GM12878 (cell line): ENCODE measurements at regions of chr4 and their contacts with region 1.

Region 1: DNA sequence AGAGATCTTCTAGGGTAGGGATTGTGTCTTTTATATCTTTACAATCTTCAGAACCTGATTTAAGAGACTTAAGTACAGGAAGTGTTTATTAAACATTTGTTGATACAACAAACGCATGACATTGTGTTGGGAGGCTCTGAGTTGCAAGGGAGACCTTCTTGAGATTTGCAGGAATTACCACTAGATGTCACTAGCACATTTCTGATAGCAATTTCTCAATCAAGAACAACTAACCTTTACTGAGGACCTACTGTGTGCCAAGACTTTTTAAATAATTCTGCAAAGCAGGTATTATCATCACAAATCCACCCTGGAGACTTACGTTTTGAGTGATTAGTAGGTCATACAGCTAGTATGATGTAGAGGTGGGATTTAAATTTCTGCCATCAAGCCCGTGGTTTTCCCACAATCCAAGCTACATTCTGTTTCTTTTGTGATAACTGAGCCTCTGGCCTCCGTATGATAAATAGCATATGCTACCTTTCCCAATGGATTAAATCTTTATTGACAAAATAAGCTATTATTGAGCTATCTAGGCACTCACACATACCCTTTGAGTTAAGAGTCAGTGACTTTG is 986.0 kb downstream of the CCSER1 start:
- DNase-seq: peak; percentile 5
- ATAC-seq: peak; percentile 60
- H3K4me3 ChIP-seq: no peak overlapping the region
- H3K27ac ChIP-seq: no peak overlapping the region
- H3K4me1 ChIP-seq: no peaks in the 10 kb centered on the region
- H3K27me3 ChIP-seq: no peaks in the 10 kb centered on the region
- CTCF ChIP-seq: peak; percentile 51 to 75 (median 57)
- EP300 ChIP-seq: no peak
- POLR2A ChIP-seq: no peak
- RAD21 ChIP-seq: peak; percentile 64

Region 2: DNA sequence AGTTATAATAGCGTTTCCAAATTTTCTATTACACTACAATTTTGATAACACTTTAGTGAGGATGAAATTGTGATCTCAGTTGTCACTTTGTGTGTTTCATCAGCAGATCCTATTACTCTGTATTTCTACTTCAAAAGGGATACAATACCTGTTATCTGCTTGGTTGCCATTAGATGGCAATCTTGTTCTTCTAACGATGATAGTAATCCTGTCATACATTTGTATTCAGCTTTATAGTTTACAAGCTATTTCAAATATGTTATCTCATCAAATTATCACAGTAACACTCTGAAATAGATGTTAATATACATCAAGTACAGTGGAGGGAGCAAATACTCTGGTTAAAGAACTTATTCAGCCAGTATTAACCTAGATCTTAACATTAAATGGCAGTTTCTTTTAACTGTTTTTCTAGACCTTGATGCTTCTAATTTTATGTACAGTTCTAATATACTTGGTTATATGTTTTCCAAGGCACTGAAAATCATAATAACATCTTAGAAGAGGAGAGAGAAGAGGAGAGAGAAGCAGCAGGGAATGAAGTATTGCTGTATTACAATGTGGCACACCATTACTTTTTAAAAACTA is 694.0 kb before region 1 on chr4:
- CTCF ChIA-PET with region 1: interaction called, 20 read pairs
- POLR2A ChIA-PET with region 1: no interaction called
- RAD21 ChIA-PET with region 1: interaction called, 9 read pairs
- SMC1A ChIA-PET with region 1: interaction called, 13 read pairs
- in situ Hi-C with region 1: no loop called
- intact Hi-C with region 1: loop called (anchors 10 kb)
- DNase-seq: no peak
- ATAC-seq: peak; percentile 79
- H3K4me3 ChIP-seq: no peak overlapping the region
- H3K27ac ChIP-seq: no peak overlapping the region
- H3K4me1 ChIP-seq: no peaks in the 10 kb centered on the region
- H3K27me3 ChIP-seq: no peaks in the 10 kb centered on the region
- CTCF ChIP-seq: peak; percentile 43 to 69 (median 55); a peak in 4 of 6 replicates
- EP300 ChIP-seq: no peak
- POLR2A ChIP-seq: no peak
- RAD21 ChIP-seq: peak; percentile 75

Region 3: GRCh38 chr4:91128519-91128918 is 15.3 kb after region 1 on chr4:
- CTCF ChIA-PET with region 1: interaction called, 21 read pairs
- POLR2A ChIA-PET with region 1: no interaction called
- RAD21 ChIA-PET with region 1: interaction called, 3 read pairs
- SMC1A ChIA-PET with region 1: interaction called, 3 read pairs
- in situ Hi-C with region 1: no loop called
- intact Hi-C with region 1: no loop called
- DNase-seq: no peak
- ATAC-seq: no peak
- H3K4me3 ChIP-seq: no peak overlapping the region
- H3K27ac ChIP-seq: no peak overlapping the region
- H3K4me1 ChIP-seq: no peaks in the 10 kb centered on the region
- H3K27me3 ChIP-seq: no peaks in the 10 kb centered on the region
- CTCF ChIP-seq: no peak
- EP300 ChIP-seq: no peak
- POLR2A ChIP-seq: no peak
- RAD21 ChIP-seq: no peak

Region 4: GRCh38 chr4:91226867-91227266 is 113.6 kb after region 1 on chr4:
- CTCF ChIA-PET with region 1: no interaction called
- POLR2A ChIA-PET with region 1: no interaction called
- RAD21 ChIA-PET with region 1: no interaction called
- SMC1A ChIA-PET with region 1: no interaction called
- in situ Hi-C with region 1: no loop called
- intact Hi-C with region 1: no loop called
- DNase-seq: no peak
- ATAC-seq: no peak
- H3K4me3 ChIP-seq: no peak overlapping the region
- H3K27ac ChIP-seq: no peak overlapping the region
- H3K4me1 ChIP-seq: no peaks in the 10 kb centered on the region
- H3K27me3 ChIP-seq: no peaks in the 10 kb centered on the region
- CTCF ChIP-seq: no peak
- EP300 ChIP-seq: no peak
- POLR2A ChIP-seq: no peak
- RAD21 ChIP-seq: no peak

Region 5: DNA sequence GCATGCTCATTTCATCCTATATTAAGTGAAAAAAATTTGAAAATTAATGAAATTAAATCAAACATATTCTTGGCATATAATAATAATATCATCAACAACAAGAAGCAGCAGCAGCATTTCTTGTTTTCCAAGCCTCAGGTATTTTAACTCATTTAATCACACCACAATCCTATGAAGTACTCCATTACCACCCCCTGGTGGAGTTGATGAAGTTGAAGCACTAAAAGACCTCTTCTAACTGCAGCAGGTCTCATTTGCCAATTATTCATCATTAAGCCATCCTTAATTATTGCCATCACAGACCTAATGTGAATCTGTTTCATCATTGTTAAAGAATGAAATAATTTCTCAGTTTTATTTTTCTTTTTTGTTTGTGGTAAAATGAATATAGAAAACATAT is 389.1 kb after region 1 on chr4:
- CTCF ChIA-PET with region 1: interaction called, 11 read pairs
- POLR2A ChIA-PET with region 1: no interaction called
- RAD21 ChIA-PET with region 1: no interaction called
- SMC1A ChIA-PET with region 1: interaction called, 3 read pairs
- in situ Hi-C with region 1: no loop called
- intact Hi-C with region 1: loop called (anchors 1 kb)
- DNase-seq: no peak
- ATAC-seq: peak; percentile 77
- H3K4me3 ChIP-seq: no peak overlapping the region
- H3K27ac ChIP-seq: no peak overlapping the region
- H3K4me1 ChIP-seq: no peaks in the 10 kb centered on the region
- H3K27me3 ChIP-seq: no peaks in the 10 kb centered on the region
- CTCF ChIP-seq: peak in 1 of 3 experiments; percentile 35; a peak in 1 of 6 replicates
- EP300 ChIP-seq: no peak
- POLR2A ChIP-seq: no peak
- RAD21 ChIP-seq: peak; percentile 26; the same call in 1 of the 2 replicates

Region 6: DNA sequence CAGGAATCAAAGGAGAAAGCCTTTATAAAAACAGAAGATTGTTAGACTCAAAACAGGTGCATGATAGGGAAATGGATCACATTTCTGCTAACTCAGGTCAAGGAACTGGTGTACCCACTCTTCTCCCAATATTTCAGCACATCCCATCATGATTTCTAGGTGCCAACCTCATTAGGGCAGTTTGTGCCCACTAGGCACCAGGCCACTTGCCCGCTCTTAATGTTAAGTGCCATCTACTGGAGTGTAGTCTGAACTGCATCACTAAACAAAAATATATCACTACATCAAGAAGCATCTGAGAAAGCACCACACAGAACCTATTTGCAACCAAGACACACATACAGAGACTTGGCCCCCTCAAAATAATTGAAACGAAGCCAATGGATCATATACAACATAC is 1050.1 kb after region 1 on chr4:
- CTCF ChIA-PET with region 1: interaction called, 3 read pairs
- POLR2A ChIA-PET with region 1: no interaction called
- RAD21 ChIA-PET with region 1: no interaction called
- SMC1A ChIA-PET with region 1: no interaction called
- in situ Hi-C with region 1: no loop called
- intact Hi-C with region 1: loop called (anchors 1 kb)
- DNase-seq: no peak
- ATAC-seq: peak; percentile 67
- H3K4me3 ChIP-seq: no peak overlapping the region
- H3K27ac ChIP-seq: no peak overlapping the region
- H3K4me1 ChIP-seq: no peaks in the 10 kb centered on the region
- H3K27me3 ChIP-seq: no peaks in the 10 kb centered on the region
- CTCF ChIP-seq: peak in 2 of 3 experiments; percentile 12 to 35; a peak in 1 of 6 replicates
- EP300 ChIP-seq: no peak
- POLR2A ChIP-seq: no peak
- RAD21 ChIP-seq: peak; percentile 25; the same call in 1 of the 2 replicates

Region 7: GRCh38 chr4:92387459-92388069 is 1274.3 kb after region 1 on chr4:
- CTCF ChIA-PET with region 1: interaction called, 16 read pairs
- POLR2A ChIA-PET with region 1: no interaction called
- RAD21 ChIA-PET with region 1: interaction called, 5 read pairs
- SMC1A ChIA-PET with region 1: interaction called, 8 read pairs
- in situ Hi-C with region 1: loop called (anchors 25 kb)
- intact Hi-C with region 1: loop called (anchors 1 kb)
- DNase-seq: peak; percentile 4
- ATAC-seq: peak; percentile 85
- H3K4me3 ChIP-seq: no peak overlapping the region
- H3K27ac ChIP-seq: no peak overlapping the region
- H3K4me1 ChIP-seq: no peaks in the 10 kb centered on the region
- H3K27me3 ChIP-seq: no peaks in the 10 kb centered on the region
- CTCF ChIP-seq: peak; percentile 47 to 55 (median 53); a peak in 5 of 6 replicates
- EP300 ChIP-seq: no peak
- POLR2A ChIP-seq: no peak
- RAD21 ChIP-seq: peak; percentile 34; the same call in 1 of the 2 replicates